ENCODE measurements at regions of chr10 and their contacts with region 1.

Region 1: GRCh38 chr10:124741281-124741921 is 2.8 kb downstream of the FAM53B start:
- DNase-seq: peak; percentile 86
- ATAC-seq: peak; percentile 51
- H3K4me3 ChIP-seq: peak overlapping the region; percentile 66 to 92 (median 78)
- H3K4me3 Mint-ChIP-seq: peak overlapping the region; percentile 93
- H3K27ac ChIP-seq: peak overlapping the region; percentile 79 to 98
- H3K27ac Mint-ChIP-seq: peak overlapping the region; percentile 98
- H3K4me1 ChIP-seq: peaks cover 60 to 73% of the 10 kb centered on the region in 2 donors
- H3K4me1 Mint-ChIP-seq: peaks cover 73% of the 10 kb centered on the region
- H3K27me3 ChIP-seq: no peaks in the 10 kb centered on the region
- H3K27me3 Mint-ChIP-seq: no peaks in the 10 kb centered on the region
- CTCF ChIP-seq: peak; percentile 95

Region 2: DNA sequence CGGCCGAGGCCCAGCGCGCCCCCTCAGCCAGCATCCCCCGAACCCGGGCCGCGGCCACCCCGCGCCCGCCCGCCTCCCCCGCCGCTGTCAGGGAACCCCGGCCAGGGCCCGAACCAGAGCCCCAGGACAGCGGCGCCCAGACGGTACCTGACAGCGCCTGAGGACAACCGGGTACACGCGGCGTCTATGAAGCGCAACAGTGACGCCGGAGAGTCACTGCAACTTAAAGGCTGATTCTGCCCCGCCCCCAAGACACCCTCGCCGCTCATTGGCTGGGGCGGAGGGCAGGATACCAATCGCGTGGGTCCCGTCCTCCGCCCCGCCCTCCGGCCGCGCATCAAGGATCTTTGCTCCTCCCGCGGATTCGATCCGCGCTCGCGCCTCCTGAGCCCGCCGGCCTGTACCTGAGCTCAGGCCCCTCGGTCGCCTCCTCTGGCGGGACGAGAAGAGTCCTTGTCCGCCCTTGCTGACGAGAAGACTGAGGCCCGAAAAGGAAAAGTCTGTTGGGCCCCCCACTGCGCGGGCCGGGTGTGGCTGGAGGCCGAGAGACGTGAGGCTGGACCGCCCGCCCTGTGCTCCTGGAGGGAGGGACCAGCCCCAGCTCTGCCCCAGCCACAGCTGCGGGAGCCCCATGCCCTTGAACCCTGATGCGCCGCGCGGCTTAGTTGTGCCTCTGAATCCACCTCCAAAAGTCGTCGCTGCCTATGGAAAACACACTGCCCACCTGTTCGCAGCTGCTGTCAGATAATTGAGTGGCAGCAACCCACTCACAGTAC is 322.5 kb before region 1 on chr10 and contains the start of gene OAT:
- CTCF ChIA-PET with region 1: interaction called, 7 read pairs
- POLR2A ChIA-PET with region 1: no interaction called
- intact Hi-C with region 1: loop called (anchors 2 kb)
- DNase-seq: peak; percentile 98
- ATAC-seq: peak; percentile 97
- H3K4me3 ChIP-seq: peak within 1 kb of the TSS; percentile 26 to 83 (median 64)
- H3K4me3 Mint-ChIP-seq: peak within 1 kb of the TSS; percentile 85
- H3K27ac ChIP-seq: peak within 1 kb of the TSS; percentile 51 to 80
- H3K27ac Mint-ChIP-seq: peak within 1 kb of the TSS; percentile 84
- H3K4me1 ChIP-seq: peaks cover 10 to 13% of the 10 kb centered on the region in 2 donors
- H3K4me1 Mint-ChIP-seq: peaks cover 16% of the 10 kb centered on the region
- H3K27me3 ChIP-seq: peaks cover 0 to 23% (median 5%) of the 10 kb centered on the region in 4 experiments
- H3K27me3 Mint-ChIP-seq: peaks cover 16% of the 10 kb centered on the region
- CTCF ChIP-seq: no peak
- total RNA-seq, gene OAT: 16.9 and 20.1 TPM in 2 replicates

Region 3: DNA sequence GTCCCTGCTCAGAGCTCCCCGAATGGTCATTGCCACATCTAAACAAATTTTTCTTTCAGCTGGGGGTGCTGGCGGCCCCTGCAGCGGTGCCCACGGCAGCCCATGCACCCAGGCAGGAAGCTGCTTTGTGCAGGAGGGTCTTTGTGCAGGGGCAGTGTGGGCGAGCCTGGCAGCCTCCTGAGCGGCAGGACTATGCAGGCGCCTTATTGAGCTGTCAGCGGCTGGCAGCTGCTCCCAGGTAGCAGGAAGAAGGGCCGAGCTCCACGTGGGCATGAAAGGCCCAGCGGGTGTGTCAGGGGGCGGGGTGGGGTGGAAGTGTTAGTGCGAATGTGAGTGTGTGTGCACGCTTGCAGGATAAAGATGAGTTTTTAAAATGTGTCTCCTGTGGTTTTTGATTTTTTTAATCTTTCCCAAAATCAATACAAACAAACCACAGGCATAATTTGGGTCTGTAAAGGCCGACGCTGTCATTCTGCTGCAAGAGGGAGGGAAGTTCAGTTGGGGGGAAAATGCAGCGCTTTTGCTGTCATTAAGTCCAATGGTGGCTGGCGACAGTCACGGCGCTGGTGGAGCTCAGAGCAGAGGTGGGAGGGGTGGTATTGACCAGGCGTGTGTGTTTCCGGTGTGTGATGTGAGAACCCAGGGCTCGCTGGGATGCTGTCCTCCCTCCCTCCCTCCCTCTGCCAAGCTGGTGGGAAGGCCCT is 195.9 kb before region 1 on chr10:
- CTCF ChIA-PET with region 1: interaction called, 415 read pairs
- POLR2A ChIA-PET with region 1: interaction called, 62 read pairs
- intact Hi-C with region 1: loop called (anchors 1 kb)
- DNase-seq: no peak
- ATAC-seq: no peak
- H3K4me3 ChIP-seq: peak overlapping the region in 4 of 5 experiments; percentile 13 to 34 (median 22)
- H3K4me3 Mint-ChIP-seq: peak overlapping the region; percentile 78
- H3K27ac ChIP-seq: peak overlapping the region; percentile 64 to 70
- H3K27ac Mint-ChIP-seq: peak overlapping the region; percentile 91
- H3K4me1 ChIP-seq: peaks cover 98 to 100% of the 10 kb centered on the region in 2 donors
- H3K4me1 Mint-ChIP-seq: peaks cover 91% of the 10 kb centered on the region
- H3K27me3 ChIP-seq: no peaks in the 10 kb centered on the region
- H3K27me3 Mint-ChIP-seq: no peaks in the 10 kb centered on the region
- CTCF ChIP-seq: no peak

Region 4: DNA sequence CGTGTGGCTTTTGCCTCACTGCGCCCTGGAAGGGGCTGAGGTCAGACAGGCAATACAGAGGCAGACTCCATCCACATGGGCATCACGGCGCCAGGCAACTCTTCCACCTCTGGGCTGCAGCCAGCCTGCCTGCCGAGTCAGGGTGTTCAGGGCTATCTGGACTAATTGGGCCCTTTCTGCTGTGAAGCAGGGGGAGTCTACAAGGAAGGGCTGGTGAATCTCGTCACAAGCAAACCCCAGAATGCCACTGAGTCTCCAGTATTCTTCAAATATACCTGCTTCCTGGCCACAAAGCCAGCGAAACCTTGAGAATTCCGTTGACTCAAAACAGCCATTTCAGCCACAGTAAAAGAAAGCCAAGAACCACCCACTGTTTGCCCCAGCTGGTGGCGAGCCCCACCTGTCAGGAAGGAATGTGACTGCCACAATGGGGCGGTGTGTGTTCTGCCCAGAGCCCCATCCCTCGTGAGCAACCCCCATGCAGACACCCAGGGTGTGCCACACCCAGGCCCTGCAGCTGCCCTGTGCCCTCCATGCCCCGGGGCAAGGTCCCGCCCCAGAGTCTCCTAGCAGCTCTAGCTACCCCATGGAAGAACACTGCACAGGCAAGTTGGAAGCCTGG is 114.5 kb before region 1 on chr10:
- CTCF ChIA-PET with region 1: interaction called, 91 read pairs
- POLR2A ChIA-PET with region 1: interaction called, 19 read pairs
- intact Hi-C with region 1: loop called (anchors 2 kb)
- DNase-seq: peak; percentile 82
- ATAC-seq: peak; percentile 81
- H3K4me3 ChIP-seq: peak overlapping the region in 1 of 5 experiments; percentile 30
- H3K4me3 Mint-ChIP-seq: peak overlapping the region; percentile 62
- H3K27ac ChIP-seq: peak overlapping the region; percentile 83 to 97
- H3K27ac Mint-ChIP-seq: peak overlapping the region; percentile 99
- H3K4me1 ChIP-seq: peaks cover 100% of the 10 kb centered on the region in 2 donors
- H3K4me1 Mint-ChIP-seq: peaks cover 94% of the 10 kb centered on the region
- H3K27me3 ChIP-seq: no peaks in the 10 kb centered on the region
- H3K27me3 Mint-ChIP-seq: no peaks in the 10 kb centered on the region
- CTCF ChIP-seq: peak; percentile 16

Region 5: DNA sequence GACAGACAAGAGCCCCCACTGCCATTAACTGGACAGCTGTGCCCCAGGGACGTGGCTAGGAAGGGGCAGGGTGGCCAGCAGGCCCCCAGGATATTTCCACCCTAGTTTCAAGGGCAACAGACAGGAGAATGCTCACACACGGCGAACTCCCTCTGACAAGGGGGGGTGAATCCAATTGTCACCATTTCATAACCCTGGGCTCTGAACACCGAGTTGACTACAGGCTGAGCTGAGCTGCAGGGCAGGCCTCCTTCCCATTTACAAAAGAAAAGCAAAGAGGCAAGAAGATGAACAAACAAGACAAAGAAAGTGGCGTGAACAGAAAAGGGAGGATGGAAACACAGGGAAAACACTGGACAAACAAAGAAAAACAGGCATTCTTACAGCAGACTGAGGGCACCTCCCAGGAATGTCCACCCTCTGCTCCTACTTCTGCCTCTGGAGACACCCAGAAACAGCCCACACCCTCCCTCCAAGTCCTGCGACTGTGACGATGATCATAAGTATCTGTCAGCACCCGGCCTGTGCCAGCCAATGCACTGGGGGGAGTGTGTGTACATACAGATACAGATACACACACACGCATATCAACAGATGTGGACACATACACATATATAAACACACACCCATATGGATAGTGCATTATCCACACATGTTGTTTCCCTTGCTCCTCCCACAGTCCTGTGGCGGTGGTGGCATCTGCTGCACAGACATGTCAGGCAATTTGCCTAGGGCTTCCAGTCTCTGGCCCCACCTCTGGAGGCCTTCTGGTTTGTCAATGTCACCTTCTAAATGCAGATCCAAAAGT is 63.4 kb before region 1 on chr10:
- CTCF ChIA-PET with region 1: interaction called, 21 read pairs
- POLR2A ChIA-PET with region 1: interaction called, 8 read pairs
- intact Hi-C with region 1: no loop called
- DNase-seq: no peak
- ATAC-seq: no peak
- H3K4me3 ChIP-seq: no peak overlapping the region
- H3K4me3 Mint-ChIP-seq: no peak overlapping the region
- H3K27ac ChIP-seq: peak overlapping the region in 1 of 2 donors; percentile 57
- H3K27ac Mint-ChIP-seq: peak overlapping the region; percentile 46
- H3K4me1 ChIP-seq: peaks cover 33 to 78% of the 10 kb centered on the region in 2 donors
- H3K4me1 Mint-ChIP-seq: peaks cover 75% of the 10 kb centered on the region
- H3K27me3 ChIP-seq: no peaks in the 10 kb centered on the region
- H3K27me3 Mint-ChIP-seq: no peaks in the 10 kb centered on the region
- CTCF ChIP-seq: no peak

Region 6: DNA sequence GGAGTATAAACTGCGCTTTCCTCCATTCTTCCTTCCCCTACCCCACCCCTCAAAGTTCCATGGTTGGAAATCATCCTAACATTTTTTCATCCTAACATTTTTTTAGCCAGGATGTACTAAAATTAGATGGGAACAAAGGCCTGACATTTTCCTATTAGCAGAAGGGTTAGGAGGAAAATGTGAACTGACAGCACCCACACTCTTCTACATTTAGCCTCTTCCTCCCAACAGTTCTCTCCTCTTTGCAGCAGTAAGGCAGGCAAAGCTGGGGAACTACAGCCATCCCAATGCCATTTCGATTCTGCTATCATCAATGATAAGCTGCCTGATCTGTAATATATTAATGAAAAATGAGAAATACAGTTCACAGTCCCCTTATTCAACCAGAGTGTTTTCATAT is 14.2 kb after region 1 on chr10:
- CTCF ChIA-PET with region 1: interaction called, 23 read pairs
- POLR2A ChIA-PET with region 1: interaction called, 3 read pairs
- intact Hi-C with region 1: no loop called
- DNase-seq: no peak
- ATAC-seq: no peak
- H3K4me3 ChIP-seq: no peak overlapping the region
- H3K4me3 Mint-ChIP-seq: no peak overlapping the region
- H3K27ac ChIP-seq: no peak overlapping the region
- H3K27ac Mint-ChIP-seq: no peak overlapping the region
- H3K4me1 ChIP-seq: no peaks in the 10 kb centered on the region
- H3K4me1 Mint-ChIP-seq: no peaks in the 10 kb centered on the region
- H3K27me3 ChIP-seq: no peaks in the 10 kb centered on the region
- H3K27me3 Mint-ChIP-seq: no peaks in the 10 kb centered on the region
- CTCF ChIP-seq: no peak

Region 7: GRCh38 chr10:124975977-124976514 is 234.6 kb after region 1 on chr10:
- CTCF ChIA-PET with region 1: no interaction called
- POLR2A ChIA-PET with region 1: no interaction called
- intact Hi-C with region 1: no loop called
- DNase-seq: no peak
- ATAC-seq: no peak
- H3K4me3 ChIP-seq: no peak overlapping the region
- H3K4me3 Mint-ChIP-seq: no peak overlapping the region
- H3K27ac ChIP-seq: no peak overlapping the region
- H3K27ac Mint-ChIP-seq: no peak overlapping the region
- H3K4me1 ChIP-seq: no peaks in the 10 kb centered on the region
- H3K4me1 Mint-ChIP-seq: peaks cover 6% of the 10 kb centered on the region
- H3K27me3 ChIP-seq: no peaks in the 10 kb centered on the region
- H3K27me3 Mint-ChIP-seq: no peaks in the 10 kb centered on the region
- CTCF ChIP-seq: no peak

Region 8: DNA sequence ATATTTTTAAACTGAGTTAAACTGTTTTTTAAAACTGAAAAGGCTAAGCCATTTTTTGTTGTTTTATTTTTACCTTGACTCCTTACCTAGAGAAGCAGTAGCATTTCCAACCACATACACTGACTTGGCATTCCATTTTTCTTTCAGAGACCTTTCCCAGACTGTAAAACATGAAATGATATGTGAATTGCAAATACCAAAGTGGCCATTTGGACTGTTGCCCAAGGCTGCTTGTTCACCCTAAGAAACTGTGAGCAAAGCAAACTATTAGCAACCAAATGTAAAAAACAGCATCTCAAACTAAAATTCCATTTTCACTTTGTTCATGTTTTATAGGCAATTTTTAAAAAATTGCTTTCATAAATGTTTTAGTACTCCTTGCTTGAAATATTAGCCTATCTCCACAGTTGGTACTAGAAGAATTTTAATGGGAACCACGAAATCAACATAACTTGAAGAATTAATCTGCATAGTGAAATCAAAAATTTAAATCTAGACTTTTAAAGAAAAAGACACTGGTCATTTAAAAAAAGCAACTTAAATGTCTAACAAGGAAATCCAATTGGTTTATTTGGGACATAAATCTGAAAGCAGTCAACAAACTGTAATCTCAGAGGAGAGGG is 1070.8 kb after region 1 on chr10:
- CTCF ChIA-PET with region 1: no interaction called
- POLR2A ChIA-PET with region 1: no interaction called
- intact Hi-C with region 1: no loop called
- DNase-seq: no peak
- ATAC-seq: no peak
- H3K4me3 ChIP-seq: no peak overlapping the region
- H3K4me3 Mint-ChIP-seq: no peak overlapping the region
- H3K27ac ChIP-seq: no peak overlapping the region
- H3K27ac Mint-ChIP-seq: no peak overlapping the region
- H3K4me1 ChIP-seq: no peaks in the 10 kb centered on the region
- H3K4me1 Mint-ChIP-seq: no peaks in the 10 kb centered on the region
- H3K27me3 ChIP-seq: no peaks in the 10 kb centered on the region
- H3K27me3 Mint-ChIP-seq: no peaks in the 10 kb centered on the region
- CTCF ChIP-seq: no peak